Aorta (tissue), 5 donors: ENCODE measurements at regions of chr5 and their contacts with region 1.

Region 1: DNA sequence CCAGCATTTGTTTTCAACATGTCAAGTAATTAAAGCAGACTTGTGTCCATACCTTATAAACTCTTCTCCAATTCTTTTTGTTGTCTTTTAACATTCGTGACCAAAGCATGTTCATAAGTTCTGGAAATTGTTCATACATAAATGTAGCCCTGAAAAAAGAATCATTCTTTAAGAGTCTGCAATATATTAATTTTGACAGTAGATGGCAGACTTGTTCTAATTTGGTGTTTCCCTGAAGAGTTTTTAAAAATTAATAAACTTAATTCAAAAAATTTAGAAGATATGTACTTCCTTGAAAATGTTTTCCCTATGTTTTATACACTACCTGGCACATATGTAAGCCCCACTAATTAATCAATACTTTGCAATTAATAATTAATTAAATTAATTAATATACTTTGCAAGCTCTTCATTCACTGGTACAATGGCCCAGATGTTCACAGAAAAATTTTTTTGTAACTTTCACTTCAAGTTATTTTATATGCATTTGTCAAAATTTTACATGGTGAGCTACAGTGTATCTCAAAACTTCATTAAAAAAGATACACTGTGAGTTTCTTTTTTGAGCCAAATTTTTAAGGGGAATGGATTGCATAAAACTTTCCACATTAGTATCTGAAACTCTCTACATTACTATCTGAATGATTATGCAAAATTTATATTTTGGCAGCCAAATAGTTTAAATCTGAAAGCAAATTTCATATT is 42.1 kb downstream of the CLINT1 start:
- DNase-seq: no peak
- ATAC-seq: no peak
- H3K4me3 ChIP-seq: no peak overlapping the region
- H3K27ac ChIP-seq: no peak overlapping the region
- H3K4me1 ChIP-seq: peaks cover 1 to 3% of the 10 kb centered on the region in 2 donors
- H3K27me3 ChIP-seq: no peaks in the 10 kb centered on the region

Region 2: GRCh38 chr5:157917899-157918809 is 101.3 kb after region 1 on chr5:
- intact Hi-C with region 1: loop called in 1 of 2 experiments (anchors 10 kb)
- DNase-seq: peak; percentile 78 to 82
- ATAC-seq: peak; percentile 58
- H3K4me3 ChIP-seq: no peak overlapping the region
- H3K27ac ChIP-seq: no peak overlapping the region
- H3K4me1 ChIP-seq: peaks cover 0 to 2% of the 10 kb centered on the region in 2 donors
- H3K27me3 ChIP-seq: no peaks in the 10 kb centered on the region

Region 3: DNA sequence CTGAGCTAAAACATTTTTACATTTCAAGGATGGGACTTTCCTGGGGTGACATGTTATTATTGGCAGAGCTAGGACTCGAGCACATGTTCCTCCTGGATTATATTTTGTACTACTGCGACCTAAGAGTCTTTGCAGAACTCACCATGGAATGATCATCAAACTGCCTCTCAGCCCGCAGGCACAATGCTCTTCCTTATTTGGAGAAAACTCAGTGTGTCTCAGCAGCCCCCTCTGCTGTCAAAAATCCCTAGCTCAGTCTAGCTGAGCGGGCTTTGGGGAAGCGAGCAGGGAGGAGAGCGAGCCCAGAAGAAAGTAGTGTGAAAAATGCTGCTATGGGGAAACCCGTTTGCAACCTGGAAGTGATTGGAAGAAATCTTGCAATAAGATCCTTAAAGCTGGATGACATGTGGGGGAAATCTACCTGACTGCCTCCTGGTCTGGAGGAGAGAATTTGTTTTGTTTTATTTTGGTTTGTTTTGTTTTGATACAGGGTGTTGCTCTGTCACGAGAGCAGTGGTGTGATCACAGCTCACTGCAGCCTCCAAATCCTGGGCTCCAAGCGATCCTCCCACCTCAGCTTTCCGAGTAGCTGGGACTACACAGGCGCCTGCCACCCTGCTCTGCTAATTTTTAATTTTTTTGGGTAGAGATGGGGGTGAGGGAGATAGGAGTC is 132.0 kb after region 1 on chr5:
- intact Hi-C with region 1: no loop called
- DNase-seq: peak; percentile 91 to 92
- ATAC-seq: peak; percentile 96
- H3K4me3 ChIP-seq: no peak overlapping the region
- H3K27ac ChIP-seq: peak overlapping the region in 1 of 2 donors; percentile 27
- H3K4me1 ChIP-seq: peaks cover 0 to 3% of the 10 kb centered on the region in 2 donors
- H3K27me3 ChIP-seq: no peaks in the 10 kb centered on the region

Region 4: GRCh38 chr5:157994906-157995519 is 178.2 kb after region 1 on chr5:
- intact Hi-C with region 1: loop called (anchors 2 to 5 kb)
- DNase-seq: peak; percentile 72 to 83
- ATAC-seq: peak; percentile 93
- H3K4me3 ChIP-seq: no peak overlapping the region
- H3K27ac ChIP-seq: no peak overlapping the region
- H3K4me1 ChIP-seq: no peaks in the 10 kb centered on the region
- H3K27me3 ChIP-seq: no peaks in the 10 kb centered on the region